GM12878 (cell line): ENCODE measurements at regions of chr15 and their contacts with region 1.

Region 1: DNA sequence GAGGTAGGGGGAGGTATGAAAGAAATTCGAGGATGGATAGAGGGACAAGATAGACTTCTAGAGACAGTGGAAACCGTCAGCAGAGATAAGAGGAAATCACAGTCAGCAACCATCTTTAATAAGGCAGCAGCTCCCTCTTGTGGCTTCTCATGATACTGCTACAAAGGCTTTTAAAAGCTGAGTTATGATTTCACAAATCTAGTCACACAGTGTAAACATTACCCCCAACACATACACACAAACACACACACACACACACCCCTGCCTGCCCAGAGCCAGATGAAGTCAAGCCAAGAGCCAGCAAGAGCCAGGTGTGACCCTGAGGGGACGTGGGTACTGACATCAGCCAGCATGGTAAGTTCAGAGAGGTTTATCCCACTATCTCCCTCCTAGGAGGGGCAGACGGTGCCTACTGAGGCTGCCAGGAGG is 18.9 kb upstream of the TGM5 start:
- DNase-seq: peak; percentile 42
- ATAC-seq: peak; percentile 91
- H3K4me3 ChIP-seq: no peak overlapping the region
- H3K27ac ChIP-seq: no peak overlapping the region
- H3K4me1 ChIP-seq: no peaks in the 10 kb centered on the region
- H3K27me3 ChIP-seq: no peaks in the 10 kb centered on the region
- CTCF ChIP-seq: peak; percentile 71 to 93 (median 84)
- EP300 ChIP-seq: no peak
- POLR2A ChIP-seq: no peak
- RAD21 ChIP-seq: peak; percentile 93

Region 2: DNA sequence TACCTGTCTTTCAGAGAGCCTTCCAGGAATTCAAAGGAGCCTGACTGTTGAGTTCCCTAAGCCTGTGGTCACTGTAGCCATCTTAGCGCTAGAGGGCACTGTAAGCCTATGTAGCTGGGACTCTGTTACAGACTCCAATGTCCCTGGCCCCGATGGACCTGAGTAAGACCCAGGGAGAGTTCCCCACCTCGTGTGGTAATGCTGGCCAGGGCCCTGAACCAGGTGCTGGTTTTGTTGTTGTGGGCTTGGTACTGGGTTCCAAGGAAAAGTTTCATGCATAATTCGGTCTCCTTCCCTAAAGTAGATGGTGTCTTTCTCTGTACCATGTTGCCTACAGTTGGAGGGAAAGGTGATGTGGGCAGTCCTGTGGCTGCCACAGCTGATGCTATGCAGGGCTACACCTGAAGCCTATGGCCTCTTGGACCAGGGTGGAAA is 581.1 kb before region 1 on chr15:
- CTCF ChIA-PET with region 1: interaction called, 7 read pairs
- POLR2A ChIA-PET with region 1: no interaction called
- RAD21 ChIA-PET with region 1: no interaction called
- SMC1A ChIA-PET with region 1: interaction called, 5 read pairs
- in situ Hi-C with region 1: no loop called
- intact Hi-C with region 1: loop called (anchors 1 kb)
- DNase-seq: peak; percentile 24
- ATAC-seq: peak; percentile 100
- H3K4me3 ChIP-seq: no peak overlapping the region
- H3K27ac ChIP-seq: no peak overlapping the region
- H3K4me1 ChIP-seq: no peaks in the 10 kb centered on the region
- H3K27me3 ChIP-seq: no peaks in the 10 kb centered on the region
- CTCF ChIP-seq: peak; percentile 87 to 89 (median 89)
- EP300 ChIP-seq: no peak
- POLR2A ChIP-seq: no peak
- RAD21 ChIP-seq: peak; percentile 95

Region 3: DNA sequence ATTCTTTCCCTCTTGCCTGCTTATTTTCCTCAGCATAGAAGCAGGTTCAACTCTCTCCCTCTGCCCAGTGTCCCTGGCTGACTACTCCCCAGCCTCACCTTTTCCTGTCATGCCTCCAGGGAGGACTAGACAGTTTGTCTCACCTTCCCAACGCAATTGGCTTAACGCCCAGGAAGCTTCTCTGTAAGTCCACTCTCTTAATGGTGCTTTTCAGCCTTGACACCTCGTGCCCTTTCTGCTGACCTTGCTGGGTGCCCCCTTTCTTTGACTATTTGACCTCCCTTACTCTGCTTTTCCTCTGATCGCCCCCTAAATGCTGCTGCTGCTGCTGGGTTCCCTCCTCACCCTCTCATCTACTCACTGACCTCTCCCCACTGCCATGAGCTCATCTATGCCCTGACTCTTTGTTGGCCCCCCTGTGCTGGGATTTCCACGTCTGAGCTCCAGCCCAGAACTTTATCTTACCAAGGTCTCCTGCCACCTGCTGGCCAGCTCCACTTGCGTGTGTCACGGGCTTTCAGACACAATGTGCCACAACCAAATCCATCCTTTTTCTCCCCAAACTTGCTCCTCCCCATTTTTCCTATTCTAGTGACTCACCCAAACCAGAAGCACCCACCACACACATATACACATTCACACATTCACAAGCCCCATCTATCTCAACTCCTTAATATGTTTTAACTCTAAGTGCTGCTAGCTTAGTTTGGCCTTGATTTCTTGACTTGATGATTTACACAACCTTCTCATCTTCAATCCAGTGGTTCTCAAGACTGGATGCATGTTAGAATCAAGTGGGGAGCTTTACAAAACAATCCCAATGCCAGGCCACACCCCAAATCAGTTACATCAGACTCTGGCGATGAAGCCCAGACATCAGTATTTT is 81.4 kb before region 1 on chr15:
- CTCF ChIA-PET with region 1: interaction called, 25 read pairs
- POLR2A ChIA-PET with region 1: no interaction called
- RAD21 ChIA-PET with region 1: interaction called, 4 read pairs
- SMC1A ChIA-PET with region 1: interaction called, 17 read pairs
- in situ Hi-C with region 1: no loop called
- intact Hi-C with region 1: no loop called
- DNase-seq: no peak
- ATAC-seq: peak; percentile 93
- H3K4me3 ChIP-seq: no peak overlapping the region
- H3K27ac ChIP-seq: no peak overlapping the region
- H3K4me1 ChIP-seq: no peaks in the 10 kb centered on the region
- H3K27me3 ChIP-seq: peaks cover 0 to 3% of the 10 kb centered on the region in 2 experiments; a peak in 3 of 4 replicates
- CTCF ChIP-seq: peak; percentile 68 to 73 (median 69)
- EP300 ChIP-seq: no peak
- POLR2A ChIP-seq: no peak
- RAD21 ChIP-seq: peak; percentile 45

Region 4: GRCh38 chr15:43225201-43225949 is 60.2 kb before region 1 on chr15:
- CTCF ChIA-PET with region 1: interaction called, 458 read pairs
- POLR2A ChIA-PET with region 1: interaction called, 9 read pairs
- RAD21 ChIA-PET with region 1: interaction called, 201 read pairs
- SMC1A ChIA-PET with region 1: interaction called, 249 read pairs
- in situ Hi-C with region 1: loop called (anchors 10 kb)
- intact Hi-C with region 1: loop called (anchors 1 kb)
- DNase-seq: peak; percentile 45
- ATAC-seq: peak; percentile 99
- H3K4me3 ChIP-seq: no peak overlapping the region
- H3K27ac ChIP-seq: no peak overlapping the region
- H3K4me1 ChIP-seq: no peaks in the 10 kb centered on the region
- H3K27me3 ChIP-seq: no peaks in the 10 kb centered on the region
- CTCF ChIP-seq: peak; percentile 73 to 89 (median 76)
- EP300 ChIP-seq: no peak
- POLR2A ChIP-seq: no peak
- RAD21 ChIP-seq: peak; percentile 99

Region 5: DNA sequence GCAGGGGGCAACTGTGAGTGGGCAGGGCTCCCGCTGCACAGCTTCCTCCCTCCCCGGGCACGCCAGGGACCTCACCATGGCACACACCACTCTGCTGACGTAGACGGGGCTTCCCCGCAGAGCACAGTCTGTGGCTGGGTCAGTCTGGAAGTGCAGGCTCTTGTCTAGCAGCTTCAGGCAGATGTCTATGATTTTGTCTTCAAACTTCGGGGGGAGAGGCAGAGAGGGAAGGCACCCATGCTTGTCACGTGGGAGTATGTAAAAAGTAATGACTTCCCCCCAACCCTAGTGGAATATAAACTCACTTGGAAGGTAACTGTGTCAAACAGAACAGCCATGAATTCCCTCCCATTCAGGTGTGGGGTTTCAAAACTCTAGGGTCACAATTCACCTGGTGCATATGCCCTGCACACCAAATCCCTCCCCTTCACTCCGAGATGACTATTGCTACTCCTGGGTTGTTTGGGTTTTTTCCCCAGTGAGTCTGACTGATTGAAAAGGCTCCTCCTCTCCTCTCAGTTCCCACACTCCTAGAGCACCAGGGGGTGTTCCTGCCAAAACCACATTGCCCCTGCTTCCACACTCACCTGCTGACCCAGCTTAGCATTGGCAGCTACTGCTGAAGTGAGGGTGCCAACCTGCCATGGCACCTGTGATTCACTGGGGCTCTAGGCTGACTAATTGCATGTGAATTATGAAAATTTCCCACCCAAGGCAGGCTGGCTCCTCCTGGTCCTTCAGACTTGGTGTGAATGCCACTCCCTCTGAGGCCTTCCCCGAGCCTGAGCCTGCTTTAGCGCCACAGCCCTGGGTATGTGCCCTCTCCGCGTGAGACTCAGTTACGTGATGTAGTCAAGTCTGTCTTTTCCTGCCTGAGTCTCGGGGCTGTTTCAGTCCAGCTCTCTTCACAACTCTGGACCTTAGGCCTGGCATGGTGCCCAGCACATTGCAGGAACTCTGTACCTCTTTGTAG is 31.9 kb before region 1 on chr15:
- CTCF ChIA-PET with region 1: interaction called, 8 read pairs
- POLR2A ChIA-PET with region 1: no interaction called
- RAD21 ChIA-PET with region 1: interaction called, 6 read pairs
- SMC1A ChIA-PET with region 1: interaction called, 12 read pairs
- in situ Hi-C with region 1: no loop called
- intact Hi-C with region 1: no loop called
- DNase-seq: peak; percentile 89
- ATAC-seq: peak; percentile 72
- H3K4me3 ChIP-seq: no peak overlapping the region
- H3K27ac ChIP-seq: peak overlapping the region; percentile 68
- H3K4me1 ChIP-seq: peaks cover 46% of the 10 kb centered on the region
- H3K27me3 ChIP-seq: no peaks in the 10 kb centered on the region
- CTCF ChIP-seq: no peak
- EP300 ChIP-seq: peak; percentile 8 to 41; a peak in 1 of 4 replicates
- POLR2A ChIP-seq: 0 out of 2 replicates have a peak, but pooled peaks have one; percentile 18
- RAD21 ChIP-seq: no peak

Region 6: GRCh38 chr15:43268111-43269105 is 17.2 kb before region 1 on chr15:
- CTCF ChIA-PET with region 1: interaction called, 37 read pairs
- POLR2A ChIA-PET with region 1: no interaction called
- RAD21 ChIA-PET with region 1: interaction called, 7 read pairs
- SMC1A ChIA-PET with region 1: interaction called, 21 read pairs
- in situ Hi-C with region 1: no loop called
- intact Hi-C with region 1: no loop called
- DNase-seq: no peak
- ATAC-seq: peak; percentile 90
- H3K4me3 ChIP-seq: no peak overlapping the region
- H3K27ac ChIP-seq: no peak overlapping the region
- H3K4me1 ChIP-seq: no peaks in the 10 kb centered on the region
- H3K27me3 ChIP-seq: no peaks in the 10 kb centered on the region
- CTCF ChIP-seq: peak; percentile 32 to 88 (median 64); a peak in 5 of 6 replicates
- EP300 ChIP-seq: no peak
- POLR2A ChIP-seq: no peak
- RAD21 ChIP-seq: peak; percentile 88

Region 7: DNA sequence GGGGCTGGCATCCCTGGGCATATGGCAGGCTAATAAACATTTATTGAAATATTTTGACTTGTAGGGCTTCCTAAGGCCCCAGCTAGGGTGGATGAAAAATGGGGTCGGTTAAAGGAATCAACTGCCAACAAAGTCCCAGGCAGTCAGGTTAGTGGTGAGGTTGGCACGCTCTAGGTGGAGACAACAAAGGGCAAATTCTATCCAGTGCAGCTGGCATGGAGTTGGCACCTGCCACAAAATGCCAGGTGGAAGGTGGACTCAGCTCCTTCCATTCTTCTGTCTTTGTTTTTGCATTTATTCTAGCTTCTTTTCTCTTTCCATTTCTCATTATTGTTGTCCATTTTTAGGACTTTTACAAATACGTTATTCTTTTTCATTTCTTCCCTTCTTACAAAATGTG is 13.8 kb after region 1 on chr15:
- CTCF ChIA-PET with region 1: interaction called, 13 read pairs
- POLR2A ChIA-PET with region 1: no interaction called
- RAD21 ChIA-PET with region 1: no interaction called
- SMC1A ChIA-PET with region 1: interaction called, 5 read pairs
- in situ Hi-C with region 1: no loop called
- intact Hi-C with region 1: no loop called
- DNase-seq: no peak
- ATAC-seq: no peak
- H3K4me3 ChIP-seq: no peak overlapping the region
- H3K27ac ChIP-seq: no peak overlapping the region
- H3K4me1 ChIP-seq: no peaks in the 10 kb centered on the region
- H3K27me3 ChIP-seq: no peaks in the 10 kb centered on the region; a peak in 2 of 4 replicates
- CTCF ChIP-seq: no peak
- EP300 ChIP-seq: no peak
- POLR2A ChIP-seq: no peak
- RAD21 ChIP-seq: no peak